Right cardiac atrium (tissue), 5 donors: ENCODE measurements at regions of chr3 and their contacts with region 1.

Region 1: GRCh38 chr3:56347219-56347871 is 120.9 kb downstream of the ERC2 start:
- DNase-seq: peak in 2 of 3 donors; percentile 11 to 41
- ATAC-seq: no peak
- H3K4me3 ChIP-seq: no peak overlapping the region
- H3K27ac ChIP-seq: no peak overlapping the region
- H3K4me1 ChIP-seq: no peaks in the 10 kb centered on the region
- H3K27me3 ChIP-seq: no peaks in the 10 kb centered on the region

Region 2: GRCh38 chr3:56389183-56389830 is 42.0 kb after region 1 on chr3:
- intact Hi-C with region 1: no loop called
- DNase-seq: no peak
- ATAC-seq: no peak
- H3K4me3 ChIP-seq: no peak overlapping the region
- H3K27ac ChIP-seq: no peak overlapping the region
- H3K4me1 ChIP-seq: no peaks in the 10 kb centered on the region
- H3K27me3 ChIP-seq: no peaks in the 10 kb centered on the region

Region 3: DNA sequence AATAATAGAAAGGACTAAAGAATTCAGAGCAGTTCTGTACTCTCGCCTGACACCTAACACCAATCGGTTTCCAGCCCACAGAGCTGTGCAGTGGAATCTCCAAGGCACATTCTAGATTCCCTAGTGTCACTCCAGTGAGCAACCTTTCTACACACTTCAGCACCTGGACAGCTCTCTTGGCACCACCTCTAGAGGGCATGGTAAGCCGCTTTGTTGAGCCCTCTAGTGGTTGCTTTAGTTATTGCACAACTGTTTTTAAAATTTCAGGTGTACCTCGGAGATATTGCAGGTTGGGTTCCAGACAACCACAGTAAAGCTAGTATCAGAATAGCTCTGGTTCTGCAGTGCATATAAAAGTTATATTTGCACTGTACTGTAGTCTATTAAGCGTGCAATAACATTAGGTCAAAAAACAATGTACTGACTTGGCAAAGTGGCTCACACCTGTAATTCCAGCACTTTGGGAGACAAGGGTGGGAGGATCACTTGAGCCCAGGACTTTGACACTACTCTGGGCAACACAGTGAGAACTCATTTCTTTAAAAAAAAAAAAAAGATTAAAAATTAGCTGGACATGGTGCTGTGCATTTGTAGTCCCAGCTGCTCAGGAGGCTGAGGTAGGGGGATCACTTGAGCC is 147.5 kb after region 1 on chr3:
- intact Hi-C with region 1: loop called in 2 of 4 experiments (anchors 5 to 10 kb)
- DNase-seq: peak; percentile 76 to 87 (median 86)
- ATAC-seq: peak; percentile 73 to 86
- H3K4me3 ChIP-seq: no peak overlapping the region
- H3K27ac ChIP-seq: no peak overlapping the region
- H3K4me1 ChIP-seq: no peaks in the 10 kb centered on the region
- H3K27me3 ChIP-seq: no peaks in the 10 kb centered on the region